H1 (cell line): ENCODE measurements at regions of chr13 and their contacts with region 1.

Region 1: DNA sequence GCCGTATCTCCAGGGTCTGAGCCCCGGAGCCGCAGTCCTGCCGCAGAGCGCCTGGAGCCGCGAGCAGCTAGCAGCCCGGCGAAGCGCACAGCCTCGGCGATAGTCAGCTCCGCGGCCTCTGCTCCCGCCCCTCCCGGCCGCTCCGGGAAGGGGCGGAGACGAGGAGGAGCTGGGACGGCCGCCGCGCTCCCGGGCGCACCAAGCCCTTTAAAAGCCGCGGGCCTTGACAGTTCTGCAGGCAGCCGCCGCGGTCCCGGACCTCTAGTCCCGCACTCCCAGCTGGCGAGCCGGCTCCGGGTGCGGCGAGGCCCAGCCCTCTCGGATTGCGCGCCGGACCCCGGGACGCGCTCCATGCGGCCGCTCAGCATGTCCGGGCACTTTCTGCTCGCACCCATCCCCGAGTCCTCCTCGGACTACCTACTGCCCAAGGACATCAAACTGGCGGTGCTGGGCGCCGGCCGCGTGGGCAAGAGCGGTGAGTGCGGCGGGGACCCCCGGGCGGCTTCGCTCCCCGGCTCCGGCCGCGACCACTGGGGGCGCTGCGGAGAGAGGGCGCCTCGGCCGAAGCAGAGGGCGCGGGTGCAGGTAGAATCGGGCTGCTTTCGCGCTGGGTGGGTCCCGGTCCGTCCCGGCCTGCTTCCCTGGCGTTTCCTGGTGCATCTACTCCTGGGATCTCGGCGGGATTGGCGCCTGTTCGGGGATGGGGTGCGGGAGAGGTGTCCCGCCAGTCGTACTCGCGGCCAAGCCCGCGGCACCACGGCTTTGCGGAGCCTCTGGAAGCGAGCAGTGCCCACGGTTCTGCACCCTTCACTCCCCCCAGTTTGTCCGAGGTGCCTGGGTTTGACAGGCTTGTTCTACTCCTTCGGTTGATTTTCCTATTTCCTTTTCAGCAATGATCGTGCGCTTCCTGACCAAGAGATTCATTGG is at the start of gene RASL11A:
- DNase-seq: peak; percentile 74 to 92
- H3K4me3 ChIP-seq: peak within 1 kb of the TSS; percentile 57 to 78 (median 69)
- H3K27ac ChIP-seq: no peak within 1 kb of the TSS
- H3K4me1 ChIP-seq: peaks cover 0 to 3% (median 0%) of the 10 kb centered on the region in 4 experiments; a peak in 1 of 7 replicates
- H3K27me3 ChIP-seq: peaks cover 0 to 15% (median 12%) of the 10 kb centered on the region in 4 experiments; a peak in 6 of 7 replicates
- CTCF ChIP-seq: peak; percentile 68 to 74 (median 71)
- EP300 ChIP-seq: no peak
- POLR2A ChIP-seq: peak; percentile 65 to 87
- RAD21 ChIP-seq: peak in 1 of 2 experiments; percentile 57; a peak in 3 of 4 replicates
- total RNA-seq, gene RASL11A: 6.8 and 7.9 TPM in 2 replicates

Region 2: DNA sequence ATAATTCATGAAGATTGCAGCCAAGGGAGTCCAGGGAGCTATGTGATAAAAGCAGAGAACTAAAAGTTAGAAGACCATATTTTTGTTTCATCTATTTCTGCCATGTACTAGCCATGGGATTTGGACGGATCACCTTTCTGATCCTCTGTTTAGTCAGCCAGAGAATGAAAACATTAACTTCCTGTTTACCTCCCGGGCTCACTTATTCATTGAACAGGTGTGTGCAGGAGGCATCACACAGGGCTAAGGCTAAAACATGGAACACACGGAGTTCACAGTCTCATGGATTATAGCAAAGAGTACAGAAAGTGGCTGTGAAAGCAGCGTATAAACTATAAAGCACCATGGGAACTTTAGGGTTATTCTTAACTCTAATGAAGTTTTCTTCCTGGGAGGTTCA is 607.1 kb before region 1 on chr13:
- CTCF ChIA-PET with region 1: no interaction called
- POLR2A ChIA-PET with region 1: no interaction called
- DNase-seq: no peak
- H3K4me3 ChIP-seq: no peak overlapping the region
- H3K27ac ChIP-seq: no peak overlapping the region
- H3K4me1 ChIP-seq: peaks cover 0 to 4% (median 1%) of the 10 kb centered on the region in 4 experiments; a peak in 4 of 7 replicates
- H3K27me3 ChIP-seq: no peaks in the 10 kb centered on the region
- CTCF ChIP-seq: no peak
- EP300 ChIP-seq: no peak
- POLR2A ChIP-seq: no peak
- RAD21 ChIP-seq: no peak

Region 3: DNA sequence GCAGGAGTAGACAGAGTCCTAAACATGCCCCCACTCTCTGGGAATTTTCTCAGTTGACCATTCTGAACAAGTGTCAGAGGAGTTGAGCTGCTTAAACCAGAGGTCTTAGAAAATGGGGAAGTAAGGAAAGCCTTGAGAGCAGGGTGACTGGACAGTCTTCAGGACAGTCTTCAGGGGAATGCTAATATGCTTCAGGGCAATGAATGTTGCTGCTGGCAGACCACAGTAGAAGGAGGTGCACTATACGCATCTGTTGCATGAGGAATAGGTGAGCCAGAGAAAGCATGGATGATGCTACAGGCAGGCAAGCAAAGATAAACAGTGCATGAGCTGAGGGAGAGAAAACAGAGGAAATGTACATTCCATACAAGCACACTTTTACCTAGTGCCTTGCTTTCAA is 313.7 kb before region 1 on chr13:
- CTCF ChIA-PET with region 1: no interaction called
- POLR2A ChIA-PET with region 1: no interaction called
- DNase-seq: no peak
- H3K4me3 ChIP-seq: no peak overlapping the region
- H3K27ac ChIP-seq: no peak overlapping the region
- H3K4me1 ChIP-seq: no peaks in the 10 kb centered on the region
- H3K27me3 ChIP-seq: no peaks in the 10 kb centered on the region
- CTCF ChIP-seq: no peak
- EP300 ChIP-seq: no peak
- POLR2A ChIP-seq: no peak
- RAD21 ChIP-seq: no peak

Region 4: GRCh38 chr13:27233964-27234363 is 36.9 kb before region 1 on chr13:
- CTCF ChIA-PET with region 1: no interaction called
- POLR2A ChIA-PET with region 1: no interaction called
- DNase-seq: no peak
- H3K4me3 ChIP-seq: no peak overlapping the region
- H3K27ac ChIP-seq: no peak overlapping the region
- H3K4me1 ChIP-seq: no peaks in the 10 kb centered on the region
- H3K27me3 ChIP-seq: no peaks in the 10 kb centered on the region
- CTCF ChIP-seq: no peak
- EP300 ChIP-seq: no peak
- POLR2A ChIP-seq: no peak
- RAD21 ChIP-seq: no peak

Region 5: GRCh38 chr13:27251166-27252091 is 19.4 kb before region 1 on chr13 and contains the start of gene RPL21:
- CTCF ChIA-PET with region 1: interaction called, 6 read pairs
- POLR2A ChIA-PET with region 1: interaction called, 197 read pairs
- DNase-seq: peak; percentile 80 to 93
- H3K4me3 ChIP-seq: peak within 1 kb of the TSS; percentile 98 to 99 (median 98)
- H3K27ac ChIP-seq: peak within 1 kb of the TSS; percentile 99
- H3K4me1 ChIP-seq: peaks cover 0 to 6% (median 2%) of the 10 kb centered on the region in 4 experiments; a peak in 4 of 7 replicates
- H3K27me3 ChIP-seq: no peaks in the 10 kb centered on the region
- CTCF ChIP-seq: no peak
- EP300 ChIP-seq: peak in 1 of 2 experiments; percentile 48; a peak in 1 of 3 replicates
- POLR2A ChIP-seq: peak; percentile 98 to 99
- RAD21 ChIP-seq: 0 out of 4 replicates have a peak, but pooled peaks of 1 of the 2 experiments have one; percentile 2
- total RNA-seq, gene RPL21: 1,233 and 1,283 TPM in 2 replicates